CD8-positive, alpha-beta memory T cell (primary cell): ENCODE measurements at regions of chr15 and their contacts with region 1.

Region 1: GRCh38 chr15:65304389-65305144 is at the start of gene RNU5B-1:
- DNase-seq: peak; percentile 59 to 89 (median 88)
- H3K4me3 ChIP-seq: peak within 1 kb of the TSS; percentile 77
- H3K4me3 Mint-ChIP-seq: peak within 1 kb of the TSS; percentile 95 to 99 (median 98)
- H3K27ac ChIP-seq: peak within 1 kb of the TSS; percentile 99
- H3K27ac Mint-ChIP-seq: peak within 1 kb of the TSS; percentile 99 to 100 (median 99)
- H3K4me1 ChIP-seq: peaks cover 19% of the 10 kb centered on the region
- H3K4me1 Mint-ChIP-seq: peaks cover 23 to 39% (median 34%) of the 10 kb centered on the region in 3 donors
- H3K27me3 ChIP-seq: no peaks in the 10 kb centered on the region
- H3K27me3 Mint-ChIP-seq: peaks cover 0 to 5% of the 10 kb centered on the region in 2 donors
- total RNA-seq, gene RNU5B-1: not detected

Region 2: GRCh38 chr15:65067645-65068402 is 236.7 kb before region 1 on chr15 and contains the start of gene RASL12:
- CTCF ChIA-PET with region 1: no interaction called
- POLR2A ChIA-PET with region 1: interaction called, 10 read pairs
- DNase-seq: no peak
- H3K4me3 ChIP-seq: no peak within 1 kb of the TSS
- H3K4me3 Mint-ChIP-seq: peak within 1 kb of the TSS in 4 of 7 donors; percentile 45 to 58 (median 55)
- H3K27ac ChIP-seq: no peak within 1 kb of the TSS
- H3K27ac Mint-ChIP-seq: peak within 1 kb of the TSS in 1 of 8 donors; percentile 55
- H3K4me1 ChIP-seq: no peaks in the 10 kb centered on the region
- H3K4me1 Mint-ChIP-seq: peaks cover 0 to 12% (median 9%) of the 10 kb centered on the region in 3 donors
- H3K27me3 ChIP-seq: peaks cover 13% of the 10 kb centered on the region
- H3K27me3 Mint-ChIP-seq: peaks cover 24 to 44% of the 10 kb centered on the region in 2 donors
- total RNA-seq, gene RASL12: not detected

Region 3: DNA sequence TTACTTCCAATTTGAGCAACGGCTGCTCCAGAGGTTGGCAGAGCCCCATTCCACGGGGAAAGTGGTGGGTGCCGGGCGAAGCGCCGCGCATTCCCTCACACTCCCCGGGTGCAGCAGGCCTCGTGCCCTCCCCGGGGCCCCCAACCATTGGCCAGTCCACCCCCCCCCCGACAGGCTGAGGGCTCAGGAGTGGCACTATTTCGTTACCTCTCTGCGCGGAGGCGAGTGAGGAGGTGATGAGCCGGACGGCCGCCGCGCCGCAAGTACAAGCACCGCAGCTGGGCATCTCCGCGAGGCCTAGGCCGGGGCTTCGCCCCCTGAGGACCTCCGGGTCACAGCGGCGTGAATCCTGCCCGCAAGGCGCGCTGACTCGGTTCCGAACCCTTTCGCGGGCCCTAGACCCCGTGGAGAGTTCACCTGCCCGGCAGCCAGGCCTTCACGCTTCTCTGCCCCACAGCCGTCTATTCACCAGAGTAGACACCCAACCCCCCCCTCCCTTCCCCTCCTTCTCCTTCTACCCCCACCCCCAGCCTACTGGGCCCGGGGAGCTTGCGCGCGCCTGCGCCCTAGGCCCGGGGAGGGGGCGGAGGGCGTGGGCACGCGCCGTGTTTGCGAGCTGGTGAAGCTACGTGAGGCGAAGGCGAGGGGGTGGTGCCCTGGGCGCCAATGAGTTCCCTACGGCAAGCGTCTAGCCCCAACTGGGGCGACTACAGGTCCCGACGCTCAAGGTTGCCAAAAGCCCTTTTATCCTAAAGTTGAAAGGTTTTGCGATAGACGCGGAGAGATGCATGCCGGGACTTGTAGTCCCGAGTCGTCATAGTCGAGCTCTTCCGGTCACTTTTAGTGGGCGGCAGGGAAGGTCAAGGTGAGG is 119.5 kb before region 1 on chr15 and contains the start of gene CLPX:
- CTCF ChIA-PET with region 1: no interaction called
- POLR2A ChIA-PET with region 1: interaction called, 16 read pairs
- DNase-seq: peak; percentile 86 to 95 (median 93)
- H3K4me3 ChIP-seq: peak within 1 kb of the TSS; percentile 76
- H3K4me3 Mint-ChIP-seq: peak within 1 kb of the TSS; percentile 93 to 96 (median 96)
- H3K27ac ChIP-seq: peak within 1 kb of the TSS; percentile 83
- H3K27ac Mint-ChIP-seq: peak within 1 kb of the TSS; percentile 94 to 98 (median 96)
- H3K4me1 ChIP-seq: peaks cover 20% of the 10 kb centered on the region
- H3K4me1 Mint-ChIP-seq: peaks cover 23 to 41% (median 39%) of the 10 kb centered on the region in 3 donors
- H3K27me3 ChIP-seq: no peaks in the 10 kb centered on the region
- H3K27me3 Mint-ChIP-seq: no peaks in the 10 kb centered on the region
- total RNA-seq, gene CLPX: 60.5 to 65.6 TPM

Region 4: GRCh38 chr15:65286704-65287519 is 17.7 kb before region 1 on chr15 and contains the start of gene PARP16:
- CTCF ChIA-PET with region 1: interaction called, 9 read pairs
- POLR2A ChIA-PET with region 1: interaction called, 24 read pairs
- DNase-seq: peak; percentile 90 to 95 (median 92)
- H3K4me3 ChIP-seq: peak within 1 kb of the TSS; percentile 80
- H3K4me3 Mint-ChIP-seq: peak within 1 kb of the TSS; percentile 67 to 94 (median 88)
- H3K27ac ChIP-seq: peak within 1 kb of the TSS; percentile 78
- H3K27ac Mint-ChIP-seq: peak within 1 kb of the TSS; percentile 7 to 96 (median 95)
- H3K4me1 ChIP-seq: peaks cover 23% of the 10 kb centered on the region
- H3K4me1 Mint-ChIP-seq: peaks cover 30 to 49% (median 48%) of the 10 kb centered on the region in 3 donors
- H3K27me3 ChIP-seq: no peaks in the 10 kb centered on the region
- H3K27me3 Mint-ChIP-seq: peaks cover 0 to 2% of the 10 kb centered on the region in 2 donors
- total RNA-seq, gene PARP16: 14.1 to 14.7 TPM

Region 5: DNA sequence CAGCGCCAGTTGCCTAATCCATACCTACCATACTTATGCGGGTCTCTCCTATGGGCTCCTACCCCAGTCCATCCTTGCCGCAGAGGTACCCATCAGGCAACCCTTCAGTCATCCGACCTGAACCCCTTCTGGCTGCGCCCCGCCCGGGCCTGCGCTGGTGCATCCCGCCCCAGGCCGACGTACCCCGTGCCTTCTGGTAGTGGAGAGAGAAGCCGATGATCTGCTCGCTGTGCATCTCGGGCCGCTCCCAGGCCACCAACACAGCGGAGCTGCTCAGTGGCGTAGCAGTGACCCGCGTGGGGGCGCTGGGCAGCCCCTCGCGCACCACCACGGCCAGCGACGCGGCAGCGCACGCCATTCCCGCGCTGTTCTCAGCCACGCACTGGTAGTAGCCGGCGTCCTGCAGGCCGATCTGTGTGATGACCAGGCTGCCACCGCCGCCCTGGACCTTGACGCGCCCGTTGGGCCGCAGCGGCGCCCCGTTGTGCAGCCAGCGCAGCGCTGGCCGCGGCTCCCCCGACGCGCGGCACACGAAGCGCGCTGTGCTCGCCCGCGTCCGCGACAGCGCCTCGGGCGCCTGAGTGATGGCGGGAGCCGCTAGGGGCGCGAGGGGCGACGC is 91.1 kb after region 1 on chr15:
- CTCF ChIA-PET with region 1: no interaction called
- POLR2A ChIA-PET with region 1: no interaction called
- DNase-seq: no peak
- H3K4me3 ChIP-seq: no peak overlapping the region
- H3K4me3 Mint-ChIP-seq: no peak overlapping the region
- H3K27ac ChIP-seq: no peak overlapping the region
- H3K27ac Mint-ChIP-seq: peak overlapping the region in 1 of 8 donors; percentile 55
- H3K4me1 ChIP-seq: no peaks in the 10 kb centered on the region
- H3K4me1 Mint-ChIP-seq: peaks cover 2 to 11% (median 5%) of the 10 kb centered on the region in 3 donors
- H3K27me3 ChIP-seq: peaks cover 28% of the 10 kb centered on the region
- H3K27me3 Mint-ChIP-seq: peaks cover 51 to 70% of the 10 kb centered on the region in 2 donors